Common myeloid progenitor, CD34-positive (primary cell): ENCODE measurements at regions of chr7 and their contacts with region 1.

Region 1: GRCh38 chr7:17680943-17681351 is 259.3 kb downstream of the SNX13 start:
- DNase-seq: peak; percentile 23 to 45 (median 28)
- H3K4me3 ChIP-seq: no peak overlapping the region
- H3K27ac ChIP-seq: no peak overlapping the region
- H3K4me1 ChIP-seq: no peaks in the 10 kb centered on the region
- H3K27me3 ChIP-seq: peaks cover 0 to 2% (median 0%) of the 10 kb centered on the region in 5 experiments

Region 2: GRCh38 chr7:17699696-17700095 is 18.7 kb after region 1 on chr7:
- CTCF ChIA-PET with region 1: interaction called, 14 read pairs
- POLR2A ChIA-PET with region 1: no interaction called
- DNase-seq: peak in 2 of 3 donors; percentile 13 to 17
- H3K4me3 ChIP-seq: no peak overlapping the region
- H3K27ac ChIP-seq: no peak overlapping the region
- H3K4me1 ChIP-seq: no peaks in the 10 kb centered on the region
- H3K27me3 ChIP-seq: no peaks in the 10 kb centered on the region